ENCODE measurements at regions of chr6 and their contacts with region 1.

Region 1: GRCh38 chr6:17178754-17179529 is 77.1 kb downstream of the STMND1 start:
- DNase-seq: no peak
- ATAC-seq: no peak
- H3K4me3 ChIP-seq: no peak overlapping the region
- H3K4me3 Mint-ChIP-seq: no peak overlapping the region
- H3K27ac ChIP-seq: no peak overlapping the region
- H3K27ac Mint-ChIP-seq: no peak overlapping the region
- H3K4me1 ChIP-seq: no peaks in the 10 kb centered on the region
- H3K4me1 Mint-ChIP-seq: no peaks in the 10 kb centered on the region
- H3K27me3 ChIP-seq: peaks cover 0 to 2% of the 10 kb centered on the region in 2 experiments
- H3K27me3 Mint-ChIP-seq: peaks cover 12 to 18% of the 10 kb centered on the region in 2 donors

Region 2: DNA sequence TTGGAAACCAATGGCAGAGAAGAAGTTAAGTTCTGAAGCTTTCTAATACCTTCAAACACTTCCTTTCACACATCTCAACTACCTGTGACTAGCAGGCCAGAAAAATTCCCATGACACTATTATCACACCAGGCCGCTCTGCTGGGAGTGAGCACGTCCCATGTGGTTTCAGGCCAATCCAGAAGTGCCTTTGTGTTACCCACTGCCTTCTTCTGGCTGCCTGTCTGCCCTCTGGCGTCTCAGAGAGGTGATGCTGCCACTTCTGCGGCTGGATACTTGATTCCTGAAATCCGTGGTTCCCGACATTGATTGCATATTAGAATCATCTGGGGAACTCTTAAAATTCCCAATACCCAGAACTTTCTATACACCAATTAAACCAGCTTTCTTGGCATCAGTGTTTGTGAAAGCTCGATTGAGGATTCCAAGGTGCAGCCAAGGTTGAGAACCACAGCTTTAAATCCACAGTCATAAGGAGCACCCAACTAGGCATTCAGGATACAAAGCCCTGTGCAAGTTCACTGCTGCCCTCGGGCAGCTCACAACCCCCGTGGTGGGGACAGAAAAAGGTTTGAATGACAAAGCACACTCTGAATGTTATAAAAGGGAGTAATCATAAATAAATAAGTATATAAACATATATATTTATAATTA is 11.5 kb before region 1 on chr6:
- CTCF ChIA-PET with region 1: no interaction called
- POLR2A ChIA-PET with region 1: interaction called in 1 of 2 experiments, 11 read pairs
- DNase-seq: no peak
- ATAC-seq: no peak
- H3K4me3 ChIP-seq: no peak overlapping the region
- H3K4me3 Mint-ChIP-seq: no peak overlapping the region
- H3K27ac ChIP-seq: no peak overlapping the region
- H3K27ac Mint-ChIP-seq: no peak overlapping the region
- H3K4me1 ChIP-seq: no peaks in the 10 kb centered on the region
- H3K4me1 Mint-ChIP-seq: no peaks in the 10 kb centered on the region
- H3K27me3 ChIP-seq: peaks cover 0 to 3% of the 10 kb centered on the region in 2 experiments
- H3K27me3 Mint-ChIP-seq: peaks cover 4 to 6% of the 10 kb centered on the region in 2 donors

Region 3: GRCh38 chr6:18323935-18324705 is 1145.2 kb after region 1 on chr6:
- CTCF ChIA-PET with region 1: interaction called in 1 of 2 experiments, 10 read pairs
- POLR2A ChIA-PET with region 1: no interaction called
- DNase-seq: peak in 7 of 35 experiments; percentile 1 to 62 (median 6)
- ATAC-seq: peak in 3 of 4 experiments; percentile 41 to 52 (median 42)
- H3K4me3 ChIP-seq: no peak overlapping the region
- H3K4me3 Mint-ChIP-seq: no peak overlapping the region
- H3K27ac ChIP-seq: no peak overlapping the region
- H3K27ac Mint-ChIP-seq: no peak overlapping the region
- H3K4me1 ChIP-seq: no peaks in the 10 kb centered on the region
- H3K4me1 Mint-ChIP-seq: peaks cover 0 to 6% (median 0%) of the 10 kb centered on the region in 3 donors
- H3K27me3 ChIP-seq: peaks cover 0 to 4% of the 10 kb centered on the region in 2 experiments
- H3K27me3 Mint-ChIP-seq: peaks cover 2 to 3% of the 10 kb centered on the region in 2 donors

Measured in T-cell (primary cell).